ENCODE measurements at regions of chr16 and their contacts with region 1.

Region 1: GRCh38 chr16:56988948-56989945 is at the start of gene NLRC5:
- DNase-seq: peak; percentile 72 to 93 (median 88)
- ATAC-seq: peak; percentile 95
- H3K4me3 ChIP-seq: peak within 1 kb of the TSS; percentile 73
- H3K4me3 Mint-ChIP-seq: peak within 1 kb of the TSS; percentile 93 to 100 (median 98)
- H3K27ac ChIP-seq: peak within 1 kb of the TSS; percentile 98
- H3K27ac Mint-ChIP-seq: peak within 1 kb of the TSS; percentile 85 to 99 (median 97)
- H3K4me1 ChIP-seq: peaks cover 24 to 51% of the 10 kb centered on the region in 2 donors
- H3K4me1 Mint-ChIP-seq: peaks cover 65 to 87% (median 73%) of the 10 kb centered on the region in 7 donors
- H3K27me3 ChIP-seq: no peaks in the 10 kb centered on the region
- H3K27me3 Mint-ChIP-seq: no peaks in the 10 kb centered on the region
- total RNA-seq, gene NLRC5: 380 to 615 (median 394) TPM

Region 2: GRCh38 chr16:56824331-56824730 is 164.9 kb before region 1 on chr16:
- CTCF ChIA-PET with region 1: no interaction called
- POLR2A ChIA-PET with region 1: no interaction called
- intact Hi-C with region 1: no loop called
- DNase-seq: no peak
- ATAC-seq: no peak
- H3K4me3 ChIP-seq: no peak overlapping the region
- H3K4me3 Mint-ChIP-seq: no peak overlapping the region
- H3K27ac ChIP-seq: no peak overlapping the region
- H3K27ac Mint-ChIP-seq: no peak overlapping the region
- H3K4me1 ChIP-seq: no peaks in the 10 kb centered on the region
- H3K4me1 Mint-ChIP-seq: peaks cover 0 to 13% (median 3%) of the 10 kb centered on the region in 7 donors
- H3K27me3 ChIP-seq: no peaks in the 10 kb centered on the region
- H3K27me3 Mint-ChIP-seq: no peaks in the 10 kb centered on the region

Region 3: DNA sequence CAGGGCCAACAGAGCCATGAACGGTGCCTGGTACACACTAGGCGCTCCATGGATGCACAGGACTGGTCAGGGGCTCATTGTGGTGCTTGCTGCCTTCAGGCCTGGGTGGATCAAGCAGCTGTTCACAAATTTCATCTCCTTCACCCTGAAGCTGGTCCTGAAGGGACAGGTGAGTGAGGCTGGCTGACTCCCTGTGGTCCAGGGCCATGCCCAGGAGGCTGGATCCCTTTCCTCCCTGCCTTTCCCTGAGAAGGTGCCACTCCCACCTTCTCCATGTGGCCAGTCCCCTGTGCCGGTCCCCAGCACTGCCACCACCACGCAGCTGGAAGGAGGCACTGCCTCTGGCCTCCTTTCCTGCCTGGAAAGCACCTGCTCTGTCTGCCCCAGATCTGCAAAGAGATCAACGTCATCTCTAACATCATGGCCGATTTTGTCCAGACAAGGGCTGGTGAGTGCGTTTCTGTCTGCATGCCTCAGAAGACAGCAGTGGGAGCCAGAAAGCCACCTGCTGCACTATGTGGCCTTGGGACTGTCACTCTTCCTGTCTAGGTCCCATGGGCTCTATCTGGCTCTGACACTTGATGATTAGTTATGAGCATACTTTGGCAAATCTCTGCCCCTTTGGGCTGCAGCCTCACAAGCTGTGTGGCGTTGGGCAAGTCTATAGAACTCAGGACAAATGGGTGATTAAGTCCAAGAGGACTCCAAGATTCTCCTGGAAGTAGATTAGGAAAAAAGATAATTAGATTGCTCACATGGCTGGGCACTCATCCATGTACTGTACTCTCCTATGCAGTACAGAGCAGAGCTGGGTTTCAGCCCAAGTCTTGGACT is 18.1 kb before region 1 on chr16:
- CTCF ChIA-PET with region 1: interaction called, 8 read pairs
- POLR2A ChIA-PET with region 1: interaction called, 27 read pairs
- intact Hi-C with region 1: no loop called
- DNase-seq: no peak
- ATAC-seq: peak; percentile 59
- H3K4me3 ChIP-seq: no peak overlapping the region
- H3K4me3 Mint-ChIP-seq: no peak overlapping the region
- H3K27ac ChIP-seq: no peak overlapping the region
- H3K27ac Mint-ChIP-seq: peak overlapping the region in 2 of 9 donors; percentile 32 to 55
- H3K4me1 ChIP-seq: peaks cover 9 to 17% of the 10 kb centered on the region in 2 donors
- H3K4me1 Mint-ChIP-seq: peaks cover 15 to 48% (median 37%) of the 10 kb centered on the region in 7 donors
- H3K27me3 ChIP-seq: no peaks in the 10 kb centered on the region
- H3K27me3 Mint-ChIP-seq: no peaks in the 10 kb centered on the region

Region 4: GRCh38 chr16:57000271-57001025 is 11.2 kb after region 1 on chr16:
- CTCF ChIA-PET with region 1: interaction called, 4 read pairs
- POLR2A ChIA-PET with region 1: interaction called, 182 read pairs
- intact Hi-C with region 1: loop called in 1 of 2 experiments (anchors 1 kb)
- DNase-seq: peak in 1 of 9 donors; percentile 55
- ATAC-seq: peak; percentile 40
- H3K4me3 ChIP-seq: peak overlapping the region; percentile 33
- H3K4me3 Mint-ChIP-seq: peak overlapping the region; percentile 20 to 98 (median 63)
- H3K27ac ChIP-seq: peak overlapping the region; percentile 77
- H3K27ac Mint-ChIP-seq: peak overlapping the region; percentile 74 to 93 (median 91)
- H3K4me1 ChIP-seq: peaks cover 78 to 79% of the 10 kb centered on the region in 2 donors
- H3K4me1 Mint-ChIP-seq: peaks cover 78 to 99% (median 89%) of the 10 kb centered on the region in 7 donors
- H3K27me3 ChIP-seq: no peaks in the 10 kb centered on the region
- H3K27me3 Mint-ChIP-seq: no peaks in the 10 kb centered on the region

Region 5: GRCh38 chr16:57023541-57024249 is 34.4 kb after region 1 on chr16:
- CTCF ChIA-PET with region 1: interaction called, 3 read pairs
- POLR2A ChIA-PET with region 1: interaction called, 111 read pairs
- intact Hi-C with region 1: no loop called
- DNase-seq: peak; percentile 54 to 80 (median 70)
- ATAC-seq: peak; percentile 95
- H3K4me3 ChIP-seq: peak overlapping the region; percentile 25
- H3K4me3 Mint-ChIP-seq: peak overlapping the region; percentile 60 to 87 (median 75)
- H3K27ac ChIP-seq: peak overlapping the region; percentile 68
- H3K27ac Mint-ChIP-seq: peak overlapping the region; percentile 77 to 94 (median 90)
- H3K4me1 ChIP-seq: peaks cover 53 to 79% of the 10 kb centered on the region in 2 donors
- H3K4me1 Mint-ChIP-seq: peaks cover 74 to 99% (median 92%) of the 10 kb centered on the region in 7 donors
- H3K27me3 ChIP-seq: no peaks in the 10 kb centered on the region
- H3K27me3 Mint-ChIP-seq: no peaks in the 10 kb centered on the region

Region 6: GRCh38 chr16:57045694-57046381 is 56.6 kb after region 1 on chr16:
- CTCF ChIA-PET with region 1: interaction called, 9 read pairs
- POLR2A ChIA-PET with region 1: interaction called, 82 read pairs
- intact Hi-C with region 1: loop called (anchors 1 kb)
- DNase-seq: peak in 2 of 9 donors; percentile 26 to 47
- ATAC-seq: peak; percentile 29
- H3K4me3 ChIP-seq: no peak overlapping the region
- H3K4me3 Mint-ChIP-seq: peak overlapping the region in 6 of 10 donors; percentile 9 to 52 (median 32)
- H3K27ac ChIP-seq: peak overlapping the region; percentile 46
- H3K27ac Mint-ChIP-seq: peak overlapping the region; percentile 60 to 97 (median 89)
- H3K4me1 ChIP-seq: peaks cover 30 to 38% of the 10 kb centered on the region in 2 donors
- H3K4me1 Mint-ChIP-seq: peaks cover 24 to 57% (median 41%) of the 10 kb centered on the region in 7 donors
- H3K27me3 ChIP-seq: no peaks in the 10 kb centered on the region
- H3K27me3 Mint-ChIP-seq: no peaks in the 10 kb centered on the region